ENCODE measurements at regions of chr17 and their contacts with region 1.

Region 1: GRCh38 chr17:35242805-35243560 is at the start of gene SLFN5:
- DNase-seq: peak; percentile 90
- ATAC-seq: peak; percentile 80
- H3K4me3 ChIP-seq: peak within 1 kb of the TSS; percentile 74 to 98 (median 92)
- H3K4me3 Mint-ChIP-seq: peak within 1 kb of the TSS; percentile 99
- H3K27ac ChIP-seq: peak within 1 kb of the TSS; percentile 75 to 79
- H3K27ac Mint-ChIP-seq: peak within 1 kb of the TSS; percentile 97
- H3K4me1 ChIP-seq: peaks cover 23 to 27% of the 10 kb centered on the region in 2 donors
- H3K4me1 Mint-ChIP-seq: peaks cover 30% of the 10 kb centered on the region
- H3K27me3 ChIP-seq: no peaks in the 10 kb centered on the region
- H3K27me3 Mint-ChIP-seq: peaks cover 4% of the 10 kb centered on the region
- CTCF ChIP-seq: no peak
- total RNA-seq, gene SLFN5: 11.1 and 12.5 TPM in 2 replicates

Region 2: GRCh38 chr17:34961093-34961911 is 281.7 kb before region 1 on chr17 and contains the starts of genes CCT6B and ZNF830:
- CTCF ChIA-PET with region 1: no interaction called
- POLR2A ChIA-PET with region 1: no interaction called
- intact Hi-C with region 1: loop called (anchors 5 kb)
- DNase-seq: peak; percentile 95
- ATAC-seq: peak; percentile 90
- H3K4me3 ChIP-seq: peak within 1 kb of the TSS; percentile 72 to 98 (median 88)
- H3K4me3 Mint-ChIP-seq: peak within 1 kb of the TSS; percentile 99
- H3K27ac ChIP-seq: peak within 1 kb of the TSS; percentile 85 to 92
- H3K27ac Mint-ChIP-seq: peak within 1 kb of the TSS; percentile 99
- H3K4me1 ChIP-seq: peaks cover 13 to 17% of the 10 kb centered on the region in 2 donors
- H3K4me1 Mint-ChIP-seq: peaks cover 25% of the 10 kb centered on the region
- H3K27me3 ChIP-seq: peaks cover 0 to 7% (median 0%) of the 10 kb centered on the region in 4 experiments
- H3K27me3 Mint-ChIP-seq: peaks cover 10% of the 10 kb centered on the region
- CTCF ChIP-seq: no peak
- total RNA-seq, gene CCT6B: 2.6 and 2.8 TPM in 2 replicates
- total RNA-seq, gene ZNF830: 44.6 and 45.4 TPM in 2 replicates

Region 3: DNA sequence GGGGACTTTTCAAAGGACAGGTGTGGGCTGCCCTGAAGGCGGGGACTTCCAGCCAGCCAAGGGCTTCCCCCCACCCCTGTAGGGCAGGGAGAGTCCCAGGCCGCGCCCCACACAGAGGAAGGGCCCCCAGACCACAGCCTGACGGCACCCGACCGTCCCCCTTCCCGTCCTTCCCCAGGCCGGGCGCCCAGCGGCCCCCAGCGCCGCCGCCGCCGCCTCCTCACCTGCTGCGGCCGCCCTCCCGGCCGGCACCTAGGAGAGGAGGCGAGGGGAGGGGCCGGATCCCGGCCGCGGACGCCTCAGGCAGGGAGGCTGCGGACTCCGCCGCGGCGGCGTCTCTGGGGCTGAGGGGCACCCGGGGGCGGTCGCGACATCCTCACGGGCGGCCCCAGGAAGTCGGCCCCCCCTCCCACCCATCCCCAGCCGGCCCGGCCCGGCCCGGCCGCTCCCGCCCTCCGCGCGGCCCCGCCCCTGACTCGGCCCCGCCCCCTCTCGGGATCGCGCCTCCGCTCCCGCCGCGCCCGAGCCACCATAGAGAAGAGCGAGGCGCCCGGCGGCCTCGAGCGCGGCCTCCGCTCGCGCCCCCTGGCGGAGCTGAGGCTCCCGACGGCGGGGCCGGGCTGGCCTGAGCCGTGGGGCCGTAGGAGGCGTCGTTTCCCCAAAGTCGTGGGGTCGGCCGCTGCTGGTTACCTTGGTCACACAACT is 153.9 kb before region 1 on chr17:
- CTCF ChIA-PET with region 1: no interaction called
- POLR2A ChIA-PET with region 1: no interaction called
- intact Hi-C with region 1: loop called (anchors 1 kb)
- DNase-seq: peak; percentile 92
- ATAC-seq: peak; percentile 84
- H3K4me3 ChIP-seq: peak overlapping the region; percentile 48 to 86 (median 76)
- H3K4me3 Mint-ChIP-seq: peak overlapping the region; percentile 94
- H3K27ac ChIP-seq: peak overlapping the region; percentile 91 to 92
- H3K27ac Mint-ChIP-seq: peak overlapping the region; percentile 94
- H3K4me1 ChIP-seq: peaks cover 17 to 21% of the 10 kb centered on the region in 2 donors
- H3K4me1 Mint-ChIP-seq: peaks cover 36% of the 10 kb centered on the region
- H3K27me3 ChIP-seq: no peaks in the 10 kb centered on the region
- H3K27me3 Mint-ChIP-seq: no peaks in the 10 kb centered on the region
- CTCF ChIP-seq: peak; percentile 73

Region 4: GRCh38 chr17:35161281-35161761 is 81.7 kb before region 1 on chr17:
- CTCF ChIA-PET with region 1: no interaction called
- POLR2A ChIA-PET with region 1: no interaction called
- intact Hi-C with region 1: no loop called
- DNase-seq: no peak
- ATAC-seq: no peak
- H3K4me3 ChIP-seq: no peak overlapping the region
- H3K4me3 Mint-ChIP-seq: no peak overlapping the region
- H3K27ac ChIP-seq: no peak overlapping the region
- H3K27ac Mint-ChIP-seq: no peak overlapping the region
- H3K4me1 ChIP-seq: no peaks in the 10 kb centered on the region
- H3K4me1 Mint-ChIP-seq: no peaks in the 10 kb centered on the region
- H3K27me3 ChIP-seq: peaks cover 0 to 22% (median 11%) of the 10 kb centered on the region in 4 experiments
- H3K27me3 Mint-ChIP-seq: peaks cover 55% of the 10 kb centered on the region
- CTCF ChIP-seq: no peak

Region 5: GRCh38 chr17:35345926-35346771 is 103.2 kb after region 1 on chr17:
- CTCF ChIA-PET with region 1: no interaction called
- POLR2A ChIA-PET with region 1: no interaction called
- intact Hi-C with region 1: loop called (anchors 5 kb)
- DNase-seq: peak; percentile 52
- ATAC-seq: peak; percentile 60
- H3K4me3 ChIP-seq: peak overlapping the region; percentile 50 to 80 (median 63)
- H3K4me3 Mint-ChIP-seq: peak overlapping the region; percentile 95
- H3K27ac ChIP-seq: peak overlapping the region; percentile 36 to 59
- H3K27ac Mint-ChIP-seq: peak overlapping the region; percentile 83
- H3K4me1 ChIP-seq: peaks cover 24 to 26% of the 10 kb centered on the region in 2 donors
- H3K4me1 Mint-ChIP-seq: peaks cover 39% of the 10 kb centered on the region
- H3K27me3 ChIP-seq: no peaks in the 10 kb centered on the region
- H3K27me3 Mint-ChIP-seq: no peaks in the 10 kb centered on the region
- CTCF ChIP-seq: no peak

Region 6: DNA sequence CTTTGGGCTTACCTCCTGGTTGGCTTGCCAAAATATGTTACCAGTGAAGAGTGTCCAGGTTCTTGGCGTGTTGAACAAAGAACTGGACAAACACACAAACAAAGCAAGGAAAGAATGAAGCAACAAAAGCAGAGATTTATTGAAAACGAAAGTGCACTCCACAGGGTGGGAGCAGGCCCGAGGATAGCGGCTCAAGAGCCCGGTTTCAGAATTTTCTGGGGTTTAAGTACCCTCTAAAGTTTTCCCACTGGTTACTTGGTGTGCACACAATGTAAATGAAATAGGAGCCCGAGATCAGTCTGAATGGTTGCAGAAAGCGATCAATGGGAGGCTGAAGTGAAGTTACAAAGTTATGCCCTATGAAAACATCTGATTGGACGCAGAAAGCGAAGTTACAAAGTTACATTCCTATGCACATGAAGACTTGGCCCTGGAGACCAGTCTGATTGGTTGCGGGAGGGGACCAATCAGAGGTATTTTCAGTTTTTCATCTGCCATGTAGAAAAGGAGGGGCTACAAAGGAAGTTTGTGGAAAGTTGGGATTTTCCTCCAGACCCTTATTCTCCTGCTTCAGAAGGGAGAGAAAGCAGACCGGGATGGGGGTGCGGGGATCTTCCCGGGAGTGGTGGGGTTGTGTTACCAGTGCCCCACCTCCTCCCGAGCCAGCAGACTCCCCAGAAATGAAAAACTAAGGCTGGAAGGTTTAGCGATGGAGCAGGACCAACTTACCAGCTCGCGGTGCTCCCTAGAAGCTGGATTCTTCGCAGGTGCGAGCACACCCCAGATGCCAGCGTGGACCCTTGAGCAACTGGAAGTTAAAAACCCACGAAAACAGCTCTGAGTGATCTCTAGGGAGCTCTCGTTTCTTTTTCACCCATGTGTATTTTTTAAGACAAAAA is 189.4 kb after region 1 on chr17 and contains the start of gene SLFN12:
- CTCF ChIA-PET with region 1: no interaction called
- POLR2A ChIA-PET with region 1: no interaction called
- intact Hi-C with region 1: loop called (anchors 2 kb)
- DNase-seq: peak; percentile 81
- ATAC-seq: peak; percentile 92
- H3K4me3 ChIP-seq: peak within 1 kb of the TSS; percentile 74 to 96 (median 90)
- H3K4me3 Mint-ChIP-seq: peak within 1 kb of the TSS; percentile 99
- H3K27ac ChIP-seq: peak within 1 kb of the TSS; percentile 38 to 65
- H3K27ac Mint-ChIP-seq: peak within 1 kb of the TSS; percentile 95
- H3K4me1 ChIP-seq: peaks cover 18 to 22% of the 10 kb centered on the region in 2 donors
- H3K4me1 Mint-ChIP-seq: peaks cover 24% of the 10 kb centered on the region
- H3K27me3 ChIP-seq: no peaks in the 10 kb centered on the region
- H3K27me3 Mint-ChIP-seq: no peaks in the 10 kb centered on the region
- CTCF ChIP-seq: no peak
- total RNA-seq, gene SLFN12: 8.0 and 10.4 TPM in 2 replicates

Region 7: DNA sequence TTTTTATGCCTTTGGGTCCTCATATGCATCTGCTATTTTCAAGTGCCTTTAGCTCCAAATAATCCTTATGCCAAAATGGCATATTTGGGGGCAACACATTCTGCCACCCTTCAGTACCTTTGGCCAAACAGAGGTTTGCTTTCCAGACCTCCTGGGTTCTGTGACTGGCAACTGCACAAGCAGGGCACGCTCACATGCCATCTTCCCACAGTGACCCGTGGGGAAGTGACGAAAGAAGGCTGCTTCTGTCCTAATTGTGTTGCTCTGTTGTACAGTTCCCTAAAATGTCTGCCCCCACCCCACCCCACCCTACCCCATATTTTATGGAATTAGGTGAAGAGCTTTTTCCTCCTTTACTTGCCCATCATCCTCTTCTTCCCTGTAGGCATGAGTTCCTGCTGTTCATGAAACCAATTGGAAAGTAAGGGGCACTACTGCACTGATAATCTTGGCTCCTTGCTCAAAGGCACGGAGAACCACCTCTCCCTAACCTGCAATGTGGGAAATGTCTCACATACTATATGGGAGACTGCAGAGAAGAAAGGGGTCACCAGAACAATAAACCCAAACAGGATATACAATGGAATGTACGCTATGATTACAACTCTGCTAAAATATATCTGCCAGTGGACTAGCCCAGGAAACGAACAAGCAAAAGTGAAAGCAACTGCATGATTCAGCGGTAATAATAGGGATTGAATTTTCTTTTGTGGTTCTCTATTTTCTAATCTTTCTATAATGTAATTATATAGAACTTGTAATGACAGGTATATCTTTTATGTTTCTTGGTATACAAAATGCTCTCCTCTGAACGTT is 297.8 kb after region 1 on chr17:
- CTCF ChIA-PET with region 1: interaction called, 4 read pairs
- POLR2A ChIA-PET with region 1: no interaction called
- intact Hi-C with region 1: loop called (anchors 1 kb)
- DNase-seq: peak; percentile 70
- ATAC-seq: peak; percentile 79
- H3K4me3 ChIP-seq: peak overlapping the region; percentile 58 to 90 (median 70)
- H3K4me3 Mint-ChIP-seq: peak overlapping the region; percentile 89
- H3K27ac ChIP-seq: peak overlapping the region; percentile 75 to 84
- H3K27ac Mint-ChIP-seq: peak overlapping the region; percentile 87
- H3K4me1 ChIP-seq: peaks cover 24 to 33% of the 10 kb centered on the region in 2 donors
- H3K4me1 Mint-ChIP-seq: peaks cover 39% of the 10 kb centered on the region
- H3K27me3 ChIP-seq: no peaks in the 10 kb centered on the region
- H3K27me3 Mint-ChIP-seq: no peaks in the 10 kb centered on the region
- CTCF ChIP-seq: no peak

Region 8: GRCh38 chr17:35808962-35809854 is 566.2 kb after region 1 on chr17 and contains the start of gene TAF15:
- CTCF ChIA-PET with region 1: no interaction called
- POLR2A ChIA-PET with region 1: no interaction called
- intact Hi-C with region 1: loop called (anchors 5 kb)
- DNase-seq: peak; percentile 98
- ATAC-seq: peak; percentile 87
- H3K4me3 ChIP-seq: peak within 1 kb of the TSS; percentile 71 to 92 (median 90)
- H3K4me3 Mint-ChIP-seq: peak within 1 kb of the TSS; percentile 92
- H3K27ac ChIP-seq: peak within 1 kb of the TSS; percentile 91 to 93
- H3K27ac Mint-ChIP-seq: peak within 1 kb of the TSS; percentile 97
- H3K4me1 ChIP-seq: peaks cover 29 to 34% of the 10 kb centered on the region in 2 donors
- H3K4me1 Mint-ChIP-seq: peaks cover 47% of the 10 kb centered on the region
- H3K27me3 ChIP-seq: no peaks in the 10 kb centered on the region
- H3K27me3 Mint-ChIP-seq: no peaks in the 10 kb centered on the region
- CTCF ChIP-seq: peak; percentile 81
- total RNA-seq, gene TAF15: 246 and 249 TPM in 2 replicates